Psoas muscle (tissue), 8 donors: ENCODE measurements at regions of chr3 and their contacts with region 1.

Region 1: DNA sequence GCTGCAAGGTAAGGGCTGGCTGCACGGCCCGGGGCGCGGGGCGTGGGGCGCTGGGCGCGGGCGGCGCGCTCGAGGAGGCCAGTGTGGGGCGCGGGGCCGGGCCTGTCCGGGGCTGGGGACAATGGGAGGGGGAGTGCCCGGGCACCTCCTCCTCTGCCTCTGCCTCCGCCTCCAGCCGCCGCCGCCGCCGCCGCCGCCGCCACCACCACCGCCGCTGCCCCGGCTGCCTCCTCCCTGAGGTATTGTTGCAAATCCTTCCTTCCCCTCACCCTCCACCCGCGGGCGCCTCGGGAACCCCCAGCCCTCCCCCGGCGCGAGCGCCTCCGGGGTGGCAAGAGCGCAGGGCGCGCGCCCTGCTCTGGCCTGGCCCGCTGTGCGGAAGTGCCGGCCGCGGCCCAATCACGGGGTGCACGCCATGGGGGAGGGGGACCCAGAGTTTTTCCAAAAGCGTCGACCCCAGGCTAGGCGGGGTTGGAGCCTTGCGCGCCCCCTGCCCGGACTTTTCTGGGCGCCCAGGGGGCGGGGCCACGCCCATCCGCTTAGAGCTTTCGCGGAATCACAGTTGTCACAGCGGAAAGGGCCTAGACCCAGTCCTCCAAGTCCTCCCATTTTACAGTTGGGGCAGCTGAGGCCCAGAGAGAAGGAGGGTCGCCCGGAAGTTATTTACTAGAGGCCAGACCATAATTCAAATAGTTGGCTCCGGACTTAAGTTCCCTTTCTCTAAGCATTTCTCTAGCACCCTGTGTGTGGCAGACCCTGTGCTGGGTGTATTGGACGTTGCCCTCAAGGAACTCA is at the start of gene LPP:
- DNase-seq: peak; percentile 81 to 90
- ATAC-seq: peak; percentile 78 to 83 (median 80)
- H3K4me3 ChIP-seq: peak within 1 kb of the TSS; percentile 80
- H3K27ac ChIP-seq: peak within 1 kb of the TSS; percentile 91
- H3K4me1 ChIP-seq: peaks cover 30% of the 10 kb centered on the region
- H3K27me3 ChIP-seq: no peaks in the 10 kb centered on the region
- CTCF ChIP-seq: no peak
- total RNA-seq, gene LPP: 42.8 to 80.3 (median 58.3) TPM

Region 2: DNA sequence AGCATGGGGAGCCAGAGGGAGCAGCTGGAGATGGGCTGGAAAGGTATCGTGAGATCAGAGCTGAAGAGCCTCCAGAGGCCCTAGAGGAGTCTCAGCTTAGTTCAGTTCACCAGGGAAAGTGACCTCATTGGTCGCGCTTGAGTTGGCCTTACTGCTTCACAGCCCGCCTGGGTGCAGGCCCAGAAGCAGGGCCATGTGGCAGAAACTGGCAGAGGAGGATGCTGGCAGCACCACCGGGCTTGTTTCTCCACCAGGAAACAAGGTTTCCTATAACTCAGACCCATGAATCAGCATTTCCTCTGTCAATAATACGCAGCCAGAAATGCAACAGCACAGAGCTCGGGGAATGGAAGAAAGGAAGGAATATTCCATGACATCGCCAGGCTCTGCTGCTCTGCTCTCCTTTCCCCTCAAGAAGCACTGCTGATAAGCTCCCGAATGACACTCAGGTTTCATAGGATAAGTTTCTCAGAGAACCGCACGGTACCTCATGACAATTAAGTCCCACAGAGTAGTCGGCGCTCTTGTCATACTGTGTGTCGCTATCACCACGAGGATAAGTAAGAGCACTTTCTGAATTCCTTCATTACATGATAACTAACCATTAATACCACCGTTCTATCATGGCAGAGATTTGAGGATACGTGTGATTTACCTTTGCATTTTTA is 147.4 kb before region 1 on chr3:
- intact Hi-C with region 1: no loop called
- DNase-seq: peak; percentile 73 to 94
- ATAC-seq: peak; percentile 95 to 97 (median 96)
- H3K4me3 ChIP-seq: peak overlapping the region; percentile 50
- H3K27ac ChIP-seq: peak overlapping the region; percentile 88
- H3K4me1 ChIP-seq: peaks cover 9% of the 10 kb centered on the region
- H3K27me3 ChIP-seq: no peaks in the 10 kb centered on the region
- CTCF ChIP-seq: no peak

Region 3: GRCh38 chr3:188262913-188263683 is 108.9 kb after region 1 on chr3:
- intact Hi-C with region 1: loop called in 1 of 2 experiments (anchors 10 kb)
- DNase-seq: peak in 1 of 2 donors; percentile 74
- ATAC-seq: peak; percentile 41 to 67 (median 56)
- H3K4me3 ChIP-seq: no peak overlapping the region
- H3K27ac ChIP-seq: peak overlapping the region; percentile 98
- H3K4me1 ChIP-seq: peaks cover 75% of the 10 kb centered on the region
- H3K27me3 ChIP-seq: no peaks in the 10 kb centered on the region
- CTCF ChIP-seq: no peak

Region 4: DNA sequence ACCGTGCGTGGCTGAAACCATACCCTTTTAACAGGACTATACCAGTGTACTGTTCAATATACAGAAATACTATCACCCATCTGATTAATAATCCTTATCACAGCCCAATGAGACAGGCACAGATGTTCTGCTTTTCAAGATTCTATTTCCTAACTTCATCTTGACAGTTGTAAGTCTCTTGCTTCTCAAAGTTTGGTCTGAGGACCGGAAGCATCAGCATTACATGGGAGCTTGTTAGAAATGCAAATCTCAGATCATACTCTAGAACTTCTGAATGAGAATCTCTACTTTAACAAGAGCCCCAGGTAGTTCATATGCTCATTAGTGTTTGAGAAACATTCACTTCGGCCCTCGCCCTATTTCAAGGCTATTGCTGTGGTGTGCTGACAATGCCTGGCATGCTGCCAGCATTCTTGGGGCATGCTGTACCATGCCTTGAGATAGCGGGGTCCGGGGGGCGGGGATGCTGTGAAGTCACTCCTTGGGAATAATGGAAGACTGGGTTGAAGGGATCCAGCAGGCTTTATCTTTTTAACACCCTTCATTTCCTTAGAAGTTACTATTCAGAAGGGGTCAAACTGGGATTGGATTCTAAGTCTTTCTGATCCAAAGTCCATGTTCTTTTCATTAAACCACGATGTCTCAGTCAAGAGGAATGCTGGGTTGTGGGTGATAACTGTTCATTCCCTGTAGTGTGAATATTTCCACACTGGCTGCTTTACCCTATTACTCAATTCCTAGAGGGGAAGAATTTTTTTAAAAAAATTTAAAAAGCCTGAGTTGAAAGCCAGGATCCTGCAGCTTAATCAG is 194.4 kb after region 1 on chr3:
- intact Hi-C with region 1: loop called in 1 of 2 experiments (anchors 10 kb)
- DNase-seq: peak; percentile 77 to 81
- ATAC-seq: peak in 3 of 4 donors; percentile 32 to 61 (median 47)
- H3K4me3 ChIP-seq: no peak overlapping the region
- H3K27ac ChIP-seq: peak overlapping the region; percentile 72
- H3K4me1 ChIP-seq: peaks cover 51% of the 10 kb centered on the region
- H3K27me3 ChIP-seq: no peaks in the 10 kb centered on the region
- CTCF ChIP-seq: no peak

Region 5: DNA sequence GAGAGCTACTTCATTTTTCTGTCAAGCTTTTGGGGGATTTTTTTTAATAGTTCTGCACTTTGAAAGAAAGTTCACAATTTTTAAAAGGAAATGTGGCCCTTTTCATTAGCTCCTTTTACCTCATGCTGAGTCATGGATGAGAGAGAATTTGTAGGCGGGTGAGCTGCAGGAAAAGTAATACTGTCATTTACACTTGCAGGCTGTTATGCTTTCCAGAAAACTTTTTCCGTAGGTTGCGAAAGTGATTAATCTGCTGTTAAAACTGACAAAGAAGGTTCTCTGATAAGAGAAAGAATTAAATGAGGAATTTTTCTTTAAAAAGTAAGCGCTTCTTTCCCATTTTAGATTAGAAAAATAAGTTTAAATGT is 429.9 kb after region 1 on chr3:
- intact Hi-C with region 1: loop called in 1 of 2 experiments (anchors 5 kb)
- DNase-seq: no peak
- ATAC-seq: peak; percentile 58 to 89 (median 82)
- H3K4me3 ChIP-seq: peak overlapping the region; percentile 63
- H3K27ac ChIP-seq: peak overlapping the region; percentile 83
- H3K4me1 ChIP-seq: peaks cover 45% of the 10 kb centered on the region
- H3K27me3 ChIP-seq: no peaks in the 10 kb centered on the region
- CTCF ChIP-seq: no peak

Region 6: GRCh38 chr3:188954590-188955208 is 800.5 kb after region 1 on chr3:
- intact Hi-C with region 1: loop called in 1 of 2 experiments (anchors 10 kb)
- DNase-seq: peak; percentile 86 to 90
- ATAC-seq: peak; percentile 85 to 90 (median 87)
- H3K4me3 ChIP-seq: no peak overlapping the region
- H3K27ac ChIP-seq: peak overlapping the region; percentile 44
- H3K4me1 ChIP-seq: peaks cover 28% of the 10 kb centered on the region
- H3K27me3 ChIP-seq: no peaks in the 10 kb centered on the region
- CTCF ChIP-seq: peak; percentile 97